Right ventricle myocardium inferior (tissue), 1 donor: ENCODE measurements at regions of chr5 and their contacts with region 1.

Region 1: GRCh38 chr5:96336351-96336985 is 96.6 kb downstream of the PCSK1 start:
- DNase-seq: no peak
- ATAC-seq: peak; percentile 77

Region 2: DNA sequence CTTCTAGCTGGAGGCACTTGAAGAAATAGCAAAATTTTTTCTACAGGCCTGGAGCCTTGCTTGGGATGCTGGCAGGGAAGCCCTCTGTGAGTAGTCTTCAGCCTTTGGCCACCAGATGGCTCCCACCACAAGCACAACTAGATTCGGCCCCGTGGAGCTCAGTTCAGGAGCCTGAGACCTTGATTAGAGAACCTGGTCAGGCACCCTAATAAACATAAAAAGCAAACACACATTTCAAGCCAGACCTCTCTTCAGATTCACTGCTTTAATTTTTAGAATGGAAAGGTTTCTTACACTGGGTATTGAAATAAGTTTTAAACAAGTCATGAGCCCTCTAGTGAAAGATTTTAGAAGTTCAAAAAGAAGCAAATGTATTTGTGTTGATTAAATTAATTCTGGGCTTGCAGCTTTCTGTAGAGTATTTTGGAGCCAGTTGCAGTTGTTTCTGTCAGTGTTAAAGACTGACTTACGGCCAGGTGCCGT is 555.3 kb before region 1 on chr5:
- intact Hi-C with region 1: loop called (anchors 10 kb)
- DNase-seq: peak; percentile 88
- ATAC-seq: peak; percentile 91

Region 3: DNA sequence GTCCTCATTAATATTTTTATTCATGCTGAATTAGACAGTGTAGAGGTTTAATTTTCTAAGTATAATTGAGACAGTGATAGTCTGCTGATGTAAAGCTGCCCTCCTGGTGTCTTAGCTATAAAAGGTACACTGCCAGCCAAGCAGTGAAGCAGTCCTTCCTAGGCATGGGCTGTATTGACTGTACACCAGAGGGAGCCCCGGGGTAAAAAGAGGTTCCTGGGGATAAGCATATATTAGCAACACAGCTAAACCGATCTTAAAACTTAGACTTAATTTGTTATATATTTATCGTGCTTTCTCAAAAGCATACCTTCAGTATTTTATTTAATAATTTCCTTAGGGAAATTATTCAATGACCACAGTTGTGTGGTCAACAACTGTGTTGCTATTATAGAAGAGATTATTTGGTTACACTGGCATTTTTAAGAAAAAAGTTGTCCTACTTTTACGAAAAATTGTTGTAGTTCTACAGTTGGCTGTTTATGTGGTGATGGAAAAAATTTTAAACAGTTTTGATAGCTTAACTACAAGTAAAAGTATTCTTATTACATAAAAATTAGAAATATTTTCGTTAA is 443.6 kb before region 1 on chr5:
- intact Hi-C with region 1: loop called (anchors 10 kb)
- DNase-seq: no peak
- ATAC-seq: peak; percentile 63

Region 4: DNA sequence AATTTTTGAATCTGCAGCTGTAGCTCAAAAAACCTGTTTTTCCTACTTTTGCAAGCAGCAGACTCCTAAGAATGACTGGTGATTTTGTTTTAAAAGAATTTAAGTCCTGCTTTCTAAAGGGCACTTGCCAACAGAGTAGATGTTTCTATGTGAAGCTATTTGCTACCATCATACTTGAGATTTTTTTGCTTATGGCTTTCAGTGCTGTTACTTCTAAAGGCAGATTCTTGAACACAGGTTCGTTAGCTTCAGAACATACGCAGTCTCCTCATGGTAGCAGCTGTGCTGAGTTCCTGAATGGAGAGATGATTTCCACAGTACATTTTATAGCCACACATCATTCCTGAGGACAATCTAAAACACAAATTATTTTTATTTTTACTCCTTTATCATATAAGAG is 350.5 kb before region 1 on chr5:
- intact Hi-C with region 1: loop called (anchors 5 kb)
- DNase-seq: no peak
- ATAC-seq: no peak

Region 5: GRCh38 chr5:96256778-96257470 is 79.5 kb before region 1 on chr5:
- intact Hi-C with region 1: no loop called
- DNase-seq: peak; percentile 20
- ATAC-seq: peak; percentile 28